Heart left ventricle (tissue), 16 donors: ENCODE measurements at regions of chr11 and their contacts with region 1.

Region 1: GRCh38 chr11:68806921-68807844 is 34.5 kb downstream of the CPT1A start:
- DNase-seq: no peak
- ATAC-seq: peak in 1 of 4 donors; percentile 30
- H3K4me3 ChIP-seq: no peak overlapping the region
- H3K27ac ChIP-seq: no peak overlapping the region
- H3K4me1 ChIP-seq: peaks cover 0 to 20% (median 13%) of the 10 kb centered on the region in 12 donors
- H3K27me3 ChIP-seq: no peaks in the 10 kb centered on the region
- CTCF ChIP-seq: no peak
- POLR2A ChIP-seq: no peak

Region 2: DNA sequence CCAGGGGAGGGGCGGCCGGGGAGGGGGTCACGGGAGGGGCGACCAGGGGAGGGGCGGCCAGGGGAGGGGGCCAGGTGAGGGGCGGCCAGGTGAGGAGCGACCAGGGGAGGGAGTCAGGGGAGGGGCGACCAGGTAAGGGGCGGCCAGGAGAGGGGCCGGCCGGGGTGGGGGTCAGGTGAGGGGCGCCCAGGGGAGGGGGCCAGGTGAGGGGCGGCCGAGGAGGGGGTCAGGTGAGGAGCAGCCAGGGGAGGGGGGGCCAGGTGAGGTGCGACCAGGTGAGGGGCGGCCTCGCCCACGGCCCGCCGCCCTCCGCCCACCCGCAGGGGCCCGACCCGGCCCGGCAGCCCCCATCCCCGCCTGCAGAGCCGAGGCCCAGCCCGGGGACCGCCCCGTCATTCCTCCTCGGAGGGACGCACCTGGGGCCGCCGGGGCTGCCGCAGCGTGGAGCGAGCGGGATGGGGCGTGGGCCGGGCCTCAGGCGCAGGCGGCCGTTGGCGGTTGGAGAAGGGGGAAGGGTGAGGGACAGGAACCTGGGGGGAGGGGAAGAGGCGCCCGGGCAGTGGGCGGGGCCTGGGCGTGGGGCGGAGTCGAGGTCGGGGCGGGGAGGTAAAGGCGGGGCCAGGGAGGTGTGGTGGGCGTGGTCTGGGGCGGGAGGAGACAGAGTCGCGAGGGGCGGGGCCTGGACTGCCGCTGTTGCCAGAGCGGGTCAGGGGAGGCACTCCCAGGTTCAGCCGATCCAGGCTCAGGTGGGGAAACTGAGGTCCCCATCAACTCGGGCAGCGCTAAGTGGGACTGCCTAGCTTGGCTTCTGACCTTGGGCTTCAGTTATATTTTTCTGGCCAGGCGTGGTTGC is 56.0 kb before region 1 on chr11 and contains the start of gene TESMIN:
- intact Hi-C with region 1: loop called in 1 of 10 experiments (anchors 10 kb)
- DNase-seq: peak; percentile 79 to 96 (median 85)
- ATAC-seq: peak; percentile 81 to 95 (median 93)
- H3K4me3 ChIP-seq: peak within 1 kb of the TSS in 9 of 12 donors; percentile 16 to 59 (median 43)
- H3K27ac ChIP-seq: no peak within 1 kb of the TSS
- H3K4me1 ChIP-seq: peaks cover 0 to 25% (median 15%) of the 10 kb centered on the region in 12 donors
- H3K27me3 ChIP-seq: no peaks in the 10 kb centered on the region
- CTCF ChIP-seq: no peak
- POLR2A ChIP-seq: no peak
- total RNA-seq, gene TESMIN: 0.12 to 2.0 (median 0.55) TPM in 8 of 9 donors, not detected in the other

Region 3: GRCh38 chr11:69173925-69174581 is 366.9 kb after region 1 on chr11:
- intact Hi-C with region 1: no loop called
- DNase-seq: no peak
- ATAC-seq: no peak
- H3K4me3 ChIP-seq: no peak overlapping the region
- H3K27ac ChIP-seq: no peak overlapping the region
- H3K4me1 ChIP-seq: no peaks in the 10 kb centered on the region
- H3K27me3 ChIP-seq: no peaks in the 10 kb centered on the region
- CTCF ChIP-seq: no peak
- POLR2A ChIP-seq: no peak